ENCODE measurements at regions of chr12 and their contacts with region 1.

Region 1: GRCh38 chr12:49967042-49967776 is 5.5 kb downstream of the AQP5 start:
- DNase-seq: peak; percentile 71
- ATAC-seq: peak; percentile 85
- H3K4me3 ChIP-seq: peak overlapping the region; percentile 38 to 56
- H3K27ac ChIP-seq: peak overlapping the region; percentile 53; the same call in 1 of the 2 replicates
- H3K4me1 ChIP-seq: peaks cover 10 to 30% of the 10 kb centered on the region in 2 experiments
- H3K27me3 ChIP-seq: 0 out of 2 replicates have a peak, but pooled peaks cover 5% of the 10 kb centered on the region
- CTCF ChIP-seq: peak; percentile 82 to 92 (median 84)
- POLR2A ChIP-seq: no peak
- RAD21 ChIP-seq: peak; percentile 91

Region 2: DNA sequence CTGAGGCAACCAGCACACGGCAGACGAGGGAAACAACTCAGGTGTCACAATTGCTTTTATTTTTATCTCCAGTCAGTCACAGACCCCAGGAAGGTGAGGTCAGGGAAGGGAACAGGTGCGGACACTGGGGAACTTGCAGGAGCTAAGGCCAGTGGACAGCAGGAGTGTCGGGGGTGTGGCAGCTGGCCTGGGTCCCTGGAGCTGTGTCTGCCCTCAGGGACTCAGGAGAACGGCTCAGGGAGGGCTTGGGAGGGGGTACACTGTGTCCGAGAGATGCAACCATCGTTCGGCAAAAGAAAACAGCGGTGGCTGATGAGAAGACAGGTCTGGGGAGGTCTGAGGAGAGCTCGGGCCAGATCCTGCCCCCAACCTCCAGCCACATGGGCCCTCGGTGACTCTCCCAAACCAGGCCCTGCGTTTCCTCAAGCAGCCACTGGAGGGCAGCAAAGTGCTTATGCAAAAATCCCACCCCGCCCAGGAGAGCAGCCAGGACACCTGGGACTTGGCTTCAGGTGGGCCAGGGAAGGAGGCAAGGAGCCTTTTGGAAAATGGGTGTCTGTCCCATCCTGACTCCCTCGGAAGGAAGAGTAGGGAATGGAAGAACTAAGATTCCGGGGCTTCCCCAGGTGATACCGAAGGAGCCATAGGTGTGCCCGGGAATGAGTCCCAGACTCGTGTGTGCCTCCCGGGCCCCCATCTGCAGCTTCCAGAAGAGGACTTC is 100.2 kb before region 1 on chr12:
- CTCF ChIA-PET with region 1: interaction called, 15 read pairs
- POLR2A ChIA-PET with region 1: no interaction called
- RAD21 ChIA-PET with region 1: interaction called, 5 to 6 read pairs
- intact Hi-C with region 1: loop called (anchors 5 kb)
- DNase-seq: peak; percentile 52
- ATAC-seq: peak; percentile 97
- H3K4me3 ChIP-seq: no peak overlapping the region
- H3K27ac ChIP-seq: no peak overlapping the region
- H3K4me1 ChIP-seq: peaks cover 0 to 11% of the 10 kb centered on the region in 2 experiments; a peak in 1 of 4 replicates
- H3K27me3 ChIP-seq: no peaks in the 10 kb centered on the region
- CTCF ChIP-seq: peak; percentile 82 to 99 (median 97)
- POLR2A ChIP-seq: no peak
- RAD21 ChIP-seq: peak; percentile 92

Region 3: GRCh38 chr12:49877066-49877465 is 90.1 kb before region 1 on chr12:
- CTCF ChIA-PET with region 1: no interaction called
- POLR2A ChIA-PET with region 1: no interaction called
- RAD21 ChIA-PET with region 1: no interaction called
- intact Hi-C with region 1: no loop called
- DNase-seq: no peak
- ATAC-seq: no peak
- H3K4me3 ChIP-seq: no peak overlapping the region
- H3K27ac ChIP-seq: no peak overlapping the region
- H3K4me1 ChIP-seq: no peaks in the 10 kb centered on the region
- H3K27me3 ChIP-seq: no peaks in the 10 kb centered on the region
- CTCF ChIP-seq: no peak
- POLR2A ChIP-seq: no peak
- RAD21 ChIP-seq: no peak

Region 4: DNA sequence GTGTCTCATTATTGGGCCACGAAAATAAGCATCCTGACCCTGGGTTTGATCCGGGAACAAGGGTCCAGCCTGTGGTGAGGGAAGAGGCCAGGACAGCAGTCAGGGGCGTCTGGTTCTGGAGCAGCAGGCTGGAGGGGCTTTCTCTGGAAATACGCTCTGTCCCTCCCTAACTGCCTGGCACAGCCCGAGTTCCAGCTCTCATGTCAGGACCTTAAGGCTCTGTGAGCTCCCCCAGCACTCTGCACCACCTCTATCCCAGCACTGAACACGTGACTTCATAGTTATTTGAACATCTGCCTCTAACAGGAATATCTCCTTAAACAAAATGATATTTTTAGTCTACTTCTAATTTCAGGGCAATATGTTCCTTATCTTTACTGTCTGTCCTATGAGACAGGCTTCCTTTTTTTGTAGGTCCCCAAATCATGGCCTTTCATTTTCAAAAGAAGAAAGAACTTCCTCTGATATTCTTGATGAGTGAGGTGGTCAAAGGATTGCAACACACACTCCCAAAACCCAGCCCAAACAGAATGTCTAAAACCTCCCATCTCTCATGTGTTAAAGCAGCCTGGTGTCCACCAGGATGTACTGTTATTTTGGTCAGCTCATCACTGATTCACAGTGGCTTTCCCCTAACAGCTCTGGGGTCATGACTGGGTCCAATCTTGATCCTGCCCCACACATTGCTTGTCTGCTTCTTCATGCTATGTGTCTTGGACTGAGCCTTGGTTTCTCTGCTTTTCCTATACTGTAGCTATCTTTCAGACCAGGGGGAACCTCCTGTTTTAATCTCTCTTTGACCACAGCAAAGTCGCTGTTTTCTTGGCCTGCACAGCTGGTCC is 15.3 kb after region 1 on chr12:
- CTCF ChIA-PET with region 1: interaction called, 25 read pairs
- POLR2A ChIA-PET with region 1: no interaction called
- RAD21 ChIA-PET with region 1: no interaction called
- intact Hi-C with region 1: no loop called
- DNase-seq: no peak
- ATAC-seq: no peak
- H3K4me3 ChIP-seq: no peak overlapping the region
- H3K27ac ChIP-seq: no peak overlapping the region
- H3K4me1 ChIP-seq: no peaks in the 10 kb centered on the region
- H3K27me3 ChIP-seq: no peaks in the 10 kb centered on the region
- CTCF ChIP-seq: no peak
- POLR2A ChIP-seq: no peak
- RAD21 ChIP-seq: no peak

Region 5: GRCh38 chr12:50066433-50066832 is 99.2 kb after region 1 on chr12:
- CTCF ChIA-PET with region 1: interaction called, 65 read pairs
- POLR2A ChIA-PET with region 1: no interaction called
- RAD21 ChIA-PET with region 1: interaction called, 6 to 9 read pairs
- intact Hi-C with region 1: loop called (anchors 1 kb)
- DNase-seq: no peak
- ATAC-seq: no peak
- H3K4me3 ChIP-seq: no peak overlapping the region
- H3K27ac ChIP-seq: no peak overlapping the region
- H3K4me1 ChIP-seq: peaks cover 0 to 19% of the 10 kb centered on the region in 2 experiments; a peak in 1 of 4 replicates
- H3K27me3 ChIP-seq: no peaks in the 10 kb centered on the region
- CTCF ChIP-seq: no peak
- POLR2A ChIP-seq: no peak
- RAD21 ChIP-seq: no peak

Region 6: GRCh38 chr12:50084775-50085614 is 117.8 kb after region 1 on chr12 and contains the start of gene SMARCD1:
- CTCF ChIA-PET with region 1: interaction called, 15 read pairs
- POLR2A ChIA-PET with region 1: no interaction called
- RAD21 ChIA-PET with region 1: no interaction called
- intact Hi-C with region 1: no loop called
- DNase-seq: peak; percentile 81
- ATAC-seq: peak; percentile 89
- H3K4me3 ChIP-seq: peak within 1 kb of the TSS; percentile 70 to 77
- H3K27ac ChIP-seq: peak within 1 kb of the TSS; percentile 59
- H3K4me1 ChIP-seq: peaks cover 5 to 21% of the 10 kb centered on the region in 2 experiments
- H3K27me3 ChIP-seq: no peaks in the 10 kb centered on the region
- CTCF ChIP-seq: peak; percentile 45 to 60 (median 56); a peak in 4 of 6 replicates
- POLR2A ChIP-seq: peak; percentile 50
- RAD21 ChIP-seq: no peak
- total RNA-seq, gene SMARCD1: 64.8 TPM

Region 7: DNA sequence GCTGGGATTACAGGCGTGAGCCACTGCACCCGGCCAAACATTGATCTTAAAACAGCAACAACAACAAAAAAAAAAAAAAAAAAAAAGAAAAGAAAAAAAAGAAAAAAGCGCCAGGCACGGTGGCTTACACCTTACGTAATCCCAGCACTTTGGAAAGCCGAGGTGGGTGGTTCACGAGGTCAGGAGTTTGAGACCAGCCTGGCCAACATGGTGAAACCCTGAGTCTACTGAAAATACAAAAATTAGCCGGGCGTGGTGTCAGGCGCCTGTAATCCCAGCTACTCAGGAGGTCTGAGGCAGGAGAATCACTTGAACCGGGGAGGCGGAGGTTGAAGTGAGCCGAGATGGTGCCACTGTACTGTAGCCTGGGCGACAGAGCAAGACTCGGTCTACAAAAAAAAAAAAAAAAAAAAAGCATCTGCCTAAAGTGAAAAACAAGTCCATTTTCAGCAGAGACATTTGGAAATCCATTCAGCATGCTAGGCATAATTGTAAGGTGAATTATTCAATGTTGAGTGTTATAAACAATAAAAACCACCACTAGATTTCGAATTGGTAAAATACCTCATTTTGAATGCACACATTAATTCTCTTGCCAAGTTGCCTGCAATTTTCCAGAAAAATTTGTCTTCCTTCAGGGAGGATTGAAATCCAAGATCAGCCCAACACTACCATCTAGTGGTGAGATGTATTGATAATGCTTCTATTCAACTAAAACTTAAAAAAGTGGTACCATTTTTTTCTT is 207.9 kb after region 1 on chr12:
- CTCF ChIA-PET with region 1: interaction called, 7 read pairs
- POLR2A ChIA-PET with region 1: no interaction called
- RAD21 ChIA-PET with region 1: interaction called in 1 of 2 experiments, 6 read pairs
- intact Hi-C with region 1: loop called (anchors 2 kb)
- DNase-seq: peak; percentile 58
- ATAC-seq: peak; percentile 63; the same call in 1 of the 2 replicates
- H3K4me3 ChIP-seq: no peak overlapping the region
- H3K27ac ChIP-seq: no peak overlapping the region
- H3K4me1 ChIP-seq: peaks cover under 1 to 4% of the 10 kb centered on the region in 2 experiments; a peak in 3 of 4 replicates
- H3K27me3 ChIP-seq: no peaks in the 10 kb centered on the region
- CTCF ChIP-seq: peak; percentile 39 to 79 (median 59); a peak in 5 of 6 replicates
- POLR2A ChIP-seq: no peak
- RAD21 ChIP-seq: peak; percentile 84